Right cardiac atrium (tissue), 5 donors: ENCODE measurements at regions of chr2 and their contacts with region 1.

Region 1: GRCh38 chr2:72745679-72746368 is 80.0 kb downstream of the EXOC6B start:
- DNase-seq: no peak
- ATAC-seq: peak in 1 of 2 donors; percentile 26
- H3K4me3 ChIP-seq: no peak overlapping the region
- H3K27ac ChIP-seq: no peak overlapping the region
- H3K4me1 ChIP-seq: peaks cover 2% of the 10 kb centered on the region
- H3K27me3 ChIP-seq: no peaks in the 10 kb centered on the region

Region 2: GRCh38 chr2:71923887-71924533 is 821.8 kb before region 1 on chr2:
- intact Hi-C with region 1: loop called in 2 of 4 experiments (anchors 10 kb)
- DNase-seq: peak; percentile 60 to 80 (median 68)
- ATAC-seq: peak; percentile 78 to 83
- H3K4me3 ChIP-seq: no peak overlapping the region
- H3K27ac ChIP-seq: no peak overlapping the region
- H3K4me1 ChIP-seq: no peaks in the 10 kb centered on the region
- H3K27me3 ChIP-seq: no peaks in the 10 kb centered on the region

Region 3: DNA sequence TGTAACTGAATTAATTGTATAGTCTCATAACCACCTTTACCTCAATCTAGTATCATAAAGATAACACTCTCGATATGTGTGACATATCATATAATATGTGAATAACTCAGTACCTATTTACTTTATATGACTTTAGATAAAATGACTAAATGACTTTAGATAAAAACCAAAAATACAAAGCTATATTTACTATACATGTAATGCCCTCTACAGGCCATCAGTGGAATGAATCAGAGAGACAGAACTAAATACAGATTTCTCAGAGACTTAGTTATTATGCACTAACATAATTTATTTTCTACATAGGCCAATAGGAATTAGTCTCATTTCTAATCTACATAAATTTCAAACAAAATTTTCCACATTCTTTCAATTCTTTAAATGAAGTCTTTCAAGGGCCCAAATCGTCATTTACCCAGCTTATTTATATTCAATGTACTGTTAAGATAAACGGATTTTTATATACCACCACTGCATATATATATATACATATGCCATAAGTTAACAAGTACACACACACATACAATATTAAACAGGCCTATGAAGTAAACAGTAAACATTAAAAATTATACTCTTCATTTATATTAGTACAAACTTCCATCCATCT is 139.9 kb before region 1 on chr2:
- intact Hi-C with region 1: loop called in 1 of 4 experiments (anchors 10 kb)
- DNase-seq: no peak
- ATAC-seq: no peak
- H3K4me3 ChIP-seq: no peak overlapping the region
- H3K27ac ChIP-seq: no peak overlapping the region
- H3K4me1 ChIP-seq: no peaks in the 10 kb centered on the region
- H3K27me3 ChIP-seq: no peaks in the 10 kb centered on the region

Region 4: DNA sequence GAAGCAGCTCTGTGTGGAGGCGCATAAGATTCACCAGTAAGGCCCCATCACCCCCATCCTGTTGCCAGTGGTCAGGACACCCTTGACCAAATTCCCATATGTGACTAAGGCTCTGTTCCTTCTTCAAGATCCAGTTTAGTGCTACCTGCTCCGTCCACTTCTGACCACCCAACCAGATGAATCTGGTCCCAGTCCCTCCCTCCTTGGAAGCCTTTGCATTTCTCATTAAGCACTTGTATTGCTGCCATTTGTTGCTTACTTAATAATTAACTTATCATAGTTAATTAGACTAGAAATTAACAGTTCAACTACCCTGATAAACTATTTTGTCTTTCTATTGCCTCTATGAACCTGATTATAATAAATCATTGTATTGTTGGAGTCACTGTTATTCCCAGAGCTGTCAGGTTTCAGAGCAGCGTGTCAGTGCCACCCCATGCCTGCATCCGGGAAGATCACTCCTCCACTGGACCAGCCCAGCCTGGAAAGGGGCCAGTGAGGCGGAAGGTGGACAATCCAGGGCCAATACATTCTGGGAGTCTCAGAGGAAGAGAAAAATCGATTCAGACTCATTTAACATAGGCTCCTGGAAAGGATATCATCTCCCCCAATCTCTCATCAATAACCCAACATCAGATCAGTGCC is 905.9 kb after region 1 on chr2:
- intact Hi-C with region 1: no loop called
- DNase-seq: no peak
- ATAC-seq: no peak
- H3K4me3 ChIP-seq: no peak overlapping the region
- H3K27ac ChIP-seq: no peak overlapping the region
- H3K4me1 ChIP-seq: no peaks in the 10 kb centered on the region
- H3K27me3 ChIP-seq: no peaks in the 10 kb centered on the region